Thyroid gland (tissue), 4 donors: ENCODE measurements at regions of chr5 and their contacts with region 1.

Region 1: DNA sequence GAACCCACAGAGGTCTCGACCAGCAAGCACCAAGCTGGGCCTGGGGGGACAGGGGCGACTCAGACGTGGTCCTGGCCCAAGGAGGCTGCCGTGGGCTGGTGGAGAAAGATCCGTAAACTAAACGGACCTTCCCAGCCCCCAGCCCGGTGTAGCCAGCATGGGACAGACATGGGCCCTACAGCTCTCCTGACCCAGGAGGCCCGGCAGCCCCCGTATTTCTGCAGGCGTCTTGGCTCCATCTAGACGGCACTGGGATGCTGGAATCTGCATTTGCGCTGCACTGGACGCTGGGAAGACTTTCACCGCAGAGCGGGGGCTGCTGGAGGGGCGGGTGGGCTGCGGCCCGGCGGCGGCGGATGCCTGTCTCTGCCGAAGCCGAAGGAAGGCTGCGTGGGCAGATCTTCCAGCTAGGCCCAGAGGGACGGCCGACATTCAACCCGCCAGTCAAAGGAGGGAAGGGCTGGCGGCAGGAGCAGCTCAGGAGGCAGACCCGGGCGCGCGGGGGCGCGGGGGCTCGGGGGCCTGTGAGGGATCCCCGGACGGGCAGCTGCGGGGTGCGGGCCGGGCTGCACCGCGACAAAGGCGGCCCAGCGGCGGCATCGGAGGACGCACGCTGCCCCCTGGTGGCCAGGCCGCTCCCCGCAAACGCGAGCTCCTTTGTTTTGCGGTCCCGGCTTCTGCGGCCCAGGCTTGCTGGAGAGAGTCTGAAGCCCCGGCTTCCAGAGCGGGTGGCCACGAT is 266.2 kb downstream of the NSG2 start:
- DNase-seq: peak; percentile 60 to 67
- H3K4me3 ChIP-seq: peak overlapping the region in 1 of 3 donors; percentile 23
- H3K27ac ChIP-seq: no peak overlapping the region
- H3K4me1 ChIP-seq: peaks cover 4 to 8% of the 10 kb centered on the region in 2 donors
- H3K27me3 ChIP-seq: peaks cover 3% of the 10 kb centered on the region
- CTCF ChIP-seq: peak; percentile 39 to 93 (median 70)
- POLR2A ChIP-seq: no peak

Region 2: DNA sequence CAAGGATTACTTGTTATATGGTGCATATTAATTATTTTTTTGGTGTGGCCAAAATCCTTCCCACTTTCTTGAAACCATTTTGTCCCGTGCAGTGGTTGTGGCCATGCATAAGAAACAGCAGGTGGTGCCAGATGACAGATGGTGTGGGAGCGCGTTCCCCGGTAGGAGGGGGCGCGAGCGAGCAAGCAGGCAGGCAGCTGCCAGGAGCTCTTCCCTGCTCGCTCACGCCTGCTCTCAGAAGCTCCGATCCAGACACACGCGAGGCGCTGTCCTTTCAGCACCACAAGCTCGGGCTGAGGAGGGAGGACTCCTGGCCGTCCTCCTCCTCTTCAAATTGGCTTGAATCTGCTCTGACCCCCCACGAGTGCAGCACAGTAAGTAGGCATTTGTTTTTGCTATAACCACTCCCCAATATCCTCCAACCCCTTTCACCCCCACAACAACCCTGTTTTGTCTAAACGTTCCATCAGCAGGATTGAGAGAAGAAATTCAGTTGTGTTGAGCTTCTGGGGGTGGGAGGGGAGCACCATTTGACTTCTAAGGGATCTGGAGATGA is 266.2 kb before region 1 on chr5 and contains the start of gene NSG2:
- intact Hi-C with region 1: loop called (anchors 5 kb)
- DNase-seq: peak; percentile 87 to 91
- H3K4me3 ChIP-seq: no peak within 1 kb of the TSS
- H3K27ac ChIP-seq: no peak within 1 kb of the TSS
- H3K4me1 ChIP-seq: no peaks in the 10 kb centered on the region
- H3K27me3 ChIP-seq: no peaks in the 10 kb centered on the region
- CTCF ChIP-seq: peak in 5 of 6 experiments; percentile 30 to 66 (median 59)
- POLR2A ChIP-seq: no peak
- total RNA-seq, gene NSG2: 1.1 to 1.2 TPM in 2 of 4 donors, not detected in the others